ENCODE measurements at regions of chr5 and their contacts with region 1.

Region 1: DNA sequence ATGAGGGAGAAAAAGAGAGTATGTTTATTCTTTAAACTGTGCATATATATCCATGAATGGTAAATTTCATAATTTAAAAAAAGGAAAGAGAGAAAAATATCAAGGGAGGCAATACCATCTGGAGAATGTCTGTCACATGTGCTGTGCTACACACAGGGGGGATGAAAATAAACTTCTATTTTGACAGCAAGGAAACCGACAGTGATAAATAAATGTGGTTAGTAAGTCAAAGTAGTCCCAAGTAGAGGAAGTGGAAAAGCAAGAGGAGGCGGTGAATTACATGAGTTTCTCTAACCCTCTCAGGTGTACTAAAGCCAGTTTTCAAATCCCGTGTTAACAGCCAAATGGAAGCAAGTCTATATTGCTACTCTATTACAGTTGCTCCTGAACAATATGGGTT is 83.3 kb downstream of the ICE1 start:
- DNase-seq: no peak
- ATAC-seq: no peak
- H3K4me3 ChIP-seq: no peak overlapping the region
- H3K27ac ChIP-seq: no peak overlapping the region
- H3K4me1 ChIP-seq: no peaks in the 10 kb centered on the region
- H3K27me3 ChIP-seq: peaks cover 0 to 3% (median 0%) of the 10 kb centered on the region in 7 donors
- CTCF ChIP-seq: no peak

Region 2: GRCh38 chr5:5613261-5613990 is 107.6 kb after region 1 on chr5:
- intact Hi-C with region 1: loop called in 1 of 10 experiments (anchors 10 kb)
- DNase-seq: no peak
- ATAC-seq: no peak
- H3K4me3 ChIP-seq: no peak overlapping the region
- H3K27ac ChIP-seq: no peak overlapping the region
- H3K4me1 ChIP-seq: peaks cover 0 to 8% (median 0%) of the 10 kb centered on the region in 9 donors
- H3K27me3 ChIP-seq: no peaks in the 10 kb centered on the region
- CTCF ChIP-seq: no peak

Region 3: DNA sequence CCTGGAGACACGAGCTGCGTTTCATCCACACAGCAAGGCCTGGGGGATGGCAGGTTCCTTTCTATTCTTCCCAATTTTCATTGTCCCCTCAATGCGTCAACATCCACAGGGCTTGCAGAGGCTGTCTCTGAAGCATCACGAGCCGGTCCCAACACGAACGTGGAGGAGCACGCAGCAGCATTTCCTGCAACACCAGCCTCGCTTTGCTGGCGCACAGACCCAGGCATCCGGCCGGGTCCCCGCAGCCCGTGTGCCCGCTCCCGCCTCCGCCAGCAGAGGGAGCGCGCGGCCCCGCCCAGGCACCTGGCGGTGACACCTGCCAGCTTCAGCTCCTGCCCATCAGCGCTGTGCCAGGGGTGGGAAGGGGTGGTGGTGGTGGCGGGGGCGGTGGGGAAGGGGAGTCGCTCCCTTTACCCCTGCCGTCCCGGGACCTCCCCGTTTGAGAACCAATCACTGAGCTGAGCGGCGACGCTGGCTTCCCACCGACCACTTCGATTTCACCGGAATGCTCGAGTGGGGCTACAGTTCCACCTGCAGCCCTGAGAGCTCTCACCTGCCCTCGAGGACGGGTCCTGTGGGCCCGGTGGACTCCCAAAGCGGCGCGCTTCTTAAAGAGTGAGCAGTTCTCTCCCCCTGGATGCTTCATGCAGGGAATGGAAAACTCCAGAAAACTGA is 381.1 kb after region 1 on chr5:
- intact Hi-C with region 1: loop called in 1 of 10 experiments (anchors 10 kb)
- DNase-seq: peak in 1 of 2 donors; percentile 17
- ATAC-seq: peak in 5 of 8 donors; percentile 20 to 80 (median 44)
- H3K4me3 ChIP-seq: no peak overlapping the region
- H3K27ac ChIP-seq: no peak overlapping the region
- H3K4me1 ChIP-seq: peaks cover 0 to 5% (median 0%) of the 10 kb centered on the region in 9 donors
- H3K27me3 ChIP-seq: peaks cover 0 to 20% (median 5%) of the 10 kb centered on the region in 7 donors
- CTCF ChIP-seq: peak; percentile 11 to 63 (median 56)